Sciatic nerve (tissue), 2 donors: ENCODE measurements at regions of chr7 and their contacts with region 1.

Region 1: DNA sequence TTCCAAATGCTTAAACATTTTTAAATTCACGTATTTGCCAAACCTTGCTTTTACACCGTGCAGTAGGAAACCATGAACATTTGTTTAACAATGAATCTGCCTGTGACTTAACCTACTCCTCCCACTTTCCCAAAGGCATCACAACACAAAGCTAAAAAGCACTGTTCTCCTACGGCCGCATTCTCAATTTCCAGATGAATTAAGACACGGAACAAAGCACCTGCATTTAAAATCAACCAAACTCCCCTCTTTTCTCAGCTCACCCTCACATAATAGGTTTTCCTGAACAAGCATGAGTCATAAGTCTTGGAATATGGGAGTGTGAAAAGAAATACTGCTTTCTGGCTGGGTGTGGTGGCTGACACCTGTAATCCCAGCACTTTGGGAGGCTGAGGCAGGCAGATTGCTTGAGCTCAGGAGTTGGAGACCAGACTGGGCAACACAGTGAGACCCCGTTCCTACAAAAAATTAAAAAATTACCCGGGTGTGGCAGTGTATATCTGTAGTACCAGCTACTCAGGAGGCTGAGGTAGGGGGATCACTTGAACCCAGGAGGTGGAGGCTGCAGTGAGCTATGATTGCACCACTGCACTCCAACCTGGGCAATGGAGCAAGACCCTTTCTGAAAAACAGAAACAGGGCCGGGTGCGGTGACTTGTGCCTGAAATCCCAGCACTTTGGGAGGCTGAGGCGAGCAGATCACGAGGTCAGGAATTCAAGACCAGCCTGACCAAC is 51.7 kb upstream of the CYTH3 start:
- DNase-seq: no peak
- ATAC-seq: no peak

Region 2: DNA sequence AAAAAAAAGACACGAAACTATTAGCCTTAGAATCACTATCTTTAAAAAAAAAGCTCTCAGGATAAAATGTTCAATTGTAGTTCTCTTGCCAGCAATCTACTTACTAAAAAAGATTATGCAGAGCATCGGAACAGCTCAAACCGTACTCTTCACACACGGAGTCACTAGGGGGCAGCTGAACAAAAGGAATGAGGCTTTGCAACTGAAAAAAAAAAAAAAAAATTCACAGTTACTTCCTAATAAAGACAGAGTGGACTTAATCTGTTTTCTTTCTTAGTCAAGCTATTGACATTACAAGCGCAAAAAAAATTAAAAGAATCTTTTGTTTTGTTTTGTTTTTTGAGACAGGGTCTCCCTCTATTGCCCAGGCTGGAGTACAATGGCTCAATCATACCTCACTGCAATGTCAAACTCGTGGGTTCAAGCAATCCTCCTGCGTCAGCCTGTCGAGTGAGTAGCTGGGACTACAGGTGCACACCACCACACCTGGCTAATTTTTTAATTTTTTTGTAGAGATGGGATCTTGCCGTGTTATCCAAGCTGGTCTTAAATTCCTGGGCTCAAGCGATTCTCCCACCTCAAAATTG is 326.8 kb before region 1 on chr7:
- intact Hi-C with region 1: loop called (anchors 10 kb)
- DNase-seq: no peak
- ATAC-seq: peak; percentile 83

Region 3: DNA sequence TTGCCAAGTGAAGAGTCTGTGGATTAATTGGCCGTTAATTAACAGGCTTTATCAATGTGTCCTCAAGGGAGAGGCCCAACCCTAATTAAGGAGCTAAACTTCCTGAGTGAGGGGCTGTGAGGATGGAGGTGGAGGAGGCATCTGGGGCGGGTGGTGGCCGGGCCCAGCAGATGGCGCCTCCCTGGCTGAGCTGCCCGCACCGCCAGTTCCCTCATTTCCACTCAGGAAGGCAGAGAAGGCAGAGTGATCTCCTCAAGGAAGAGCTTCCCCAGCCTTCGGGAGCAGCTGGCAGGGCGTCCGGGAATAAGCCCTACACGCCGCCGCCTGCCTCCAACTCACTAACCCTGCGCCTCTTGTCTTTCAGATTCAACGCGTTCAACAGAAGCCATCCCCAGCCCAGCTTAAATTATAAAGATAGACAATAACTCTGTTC is 163.9 kb before region 1 on chr7:
- intact Hi-C with region 1: loop called (anchors 2 kb)
- DNase-seq: peak; percentile 83
- ATAC-seq: peak; percentile 84